Esophagus muscularis mucosa (tissue), 4 donors: ENCODE measurements at regions of chr10 and their contacts with region 1.

Region 1: DNA sequence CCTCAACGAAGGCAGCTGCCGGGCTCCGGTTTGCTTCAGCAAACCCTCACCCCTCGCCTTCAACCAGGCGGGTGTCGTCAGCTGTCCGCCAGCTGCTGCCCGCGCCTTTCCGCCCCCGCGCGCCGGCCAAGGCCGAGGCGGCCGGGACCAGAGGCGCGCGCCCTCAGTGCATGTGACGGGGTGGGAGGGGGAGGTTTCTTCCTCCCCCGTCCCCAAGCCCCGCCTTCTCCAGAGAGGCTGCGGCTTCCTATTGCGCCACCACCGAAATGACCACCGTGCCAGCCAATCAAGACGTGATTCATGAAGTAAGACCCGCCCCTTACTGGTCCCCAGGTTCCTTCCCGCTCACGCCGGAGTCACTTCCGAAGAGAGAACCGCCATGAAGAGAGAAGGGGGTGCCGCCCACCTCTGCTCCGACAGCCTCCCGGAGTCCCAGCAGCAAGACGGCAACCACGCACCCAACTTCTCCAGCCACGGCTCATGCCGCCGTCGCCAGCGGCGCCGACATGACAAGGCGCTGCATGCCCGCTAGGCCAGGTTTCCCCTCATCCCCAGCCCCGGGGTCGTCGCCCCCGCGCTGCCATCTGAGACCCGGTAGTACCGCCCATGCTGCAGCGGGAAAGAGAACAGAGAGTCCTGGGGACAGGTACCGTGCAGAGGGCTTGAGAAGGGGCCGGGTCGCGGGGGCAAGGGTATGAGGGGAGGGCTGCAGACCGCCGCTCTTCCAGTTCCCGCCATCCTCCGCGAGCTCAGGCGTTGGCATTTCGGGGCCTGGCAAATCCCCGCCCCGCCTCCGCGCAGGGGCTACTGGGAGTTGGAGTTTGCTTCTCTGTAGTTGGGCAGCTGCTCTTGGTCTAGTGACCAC is at the start of gene SLF2:
- DNase-seq: peak; percentile 100
- H3K4me3 ChIP-seq: peak within 1 kb of the TSS; percentile 80 to 100 (median 94)
- H3K27ac ChIP-seq: peak within 1 kb of the TSS; percentile 92 to 97 (median 96)
- H3K4me1 ChIP-seq: peaks cover 30 to 41% (median 33%) of the 10 kb centered on the region in 4 donors
- H3K27me3 ChIP-seq: no peaks in the 10 kb centered on the region
- CTCF ChIP-seq: peak in 1 of 3 experiments; percentile 1
- EP300 ChIP-seq: peak; percentile 3
- POLR2A ChIP-seq: peak; percentile 64
- total RNA-seq, gene SLF2: 19.1 to 34.1 (median 20.8) TPM

Region 2: GRCh38 chr10:100535715-100536353 is 377.0 kb before region 1 on chr10 and contains the start of gene HIF1AN:
- intact Hi-C with region 1: loop called (anchors 5 kb)
- DNase-seq: peak; percentile 95
- H3K4me3 ChIP-seq: peak within 1 kb of the TSS; percentile 66 to 89 (median 82)
- H3K27ac ChIP-seq: peak within 1 kb of the TSS; percentile 71 to 83 (median 78)
- H3K4me1 ChIP-seq: peaks cover 9 to 43% (median 35%) of the 10 kb centered on the region in 4 donors
- H3K27me3 ChIP-seq: no peaks in the 10 kb centered on the region
- CTCF ChIP-seq: peak; percentile 94 to 96 (median 96)
- EP300 ChIP-seq: no peak
- POLR2A ChIP-seq: peak; percentile 50
- total RNA-seq, gene HIF1AN: 7.6 to 15.4 (median 13.6) TPM

Region 3: DNA sequence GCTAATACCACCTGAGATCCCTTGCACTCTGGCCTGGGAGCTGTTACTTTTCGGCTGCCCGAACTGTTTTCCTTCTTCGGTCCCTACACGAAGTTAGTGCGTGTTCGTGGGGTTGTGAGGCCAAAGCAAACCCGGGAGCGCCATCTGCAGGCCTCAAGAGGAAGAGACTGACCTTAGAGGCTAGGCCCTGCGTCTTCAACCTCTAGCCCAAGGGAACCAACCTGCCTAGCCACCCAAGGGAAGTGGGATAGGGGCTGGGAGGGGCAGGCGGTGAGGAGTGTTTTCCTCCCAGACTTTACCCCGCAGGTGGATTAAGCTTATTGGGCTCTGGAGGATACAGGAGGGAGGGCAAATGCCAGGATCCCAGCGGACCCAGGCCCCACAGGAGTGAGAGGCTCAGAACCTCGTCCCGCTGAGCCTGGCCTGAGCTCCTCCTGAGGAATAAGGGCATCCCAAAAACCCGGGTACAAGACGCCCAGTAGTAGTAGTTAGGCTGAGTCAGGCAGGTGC is 169.2 kb before region 1 on chr10:
- intact Hi-C with region 1: no loop called
- DNase-seq: no peak
- H3K4me3 ChIP-seq: peak overlapping the region in 1 of 4 donors; percentile 47
- H3K27ac ChIP-seq: no peak overlapping the region
- H3K4me1 ChIP-seq: peaks cover 46 to 94% (median 83%) of the 10 kb centered on the region in 4 donors
- H3K27me3 ChIP-seq: peaks cover 7 to 100% (median 91%) of the 10 kb centered on the region in 4 donors
- CTCF ChIP-seq: peak; percentile 36 to 53 (median 39)
- EP300 ChIP-seq: no peak
- POLR2A ChIP-seq: no peak

Region 4: DNA sequence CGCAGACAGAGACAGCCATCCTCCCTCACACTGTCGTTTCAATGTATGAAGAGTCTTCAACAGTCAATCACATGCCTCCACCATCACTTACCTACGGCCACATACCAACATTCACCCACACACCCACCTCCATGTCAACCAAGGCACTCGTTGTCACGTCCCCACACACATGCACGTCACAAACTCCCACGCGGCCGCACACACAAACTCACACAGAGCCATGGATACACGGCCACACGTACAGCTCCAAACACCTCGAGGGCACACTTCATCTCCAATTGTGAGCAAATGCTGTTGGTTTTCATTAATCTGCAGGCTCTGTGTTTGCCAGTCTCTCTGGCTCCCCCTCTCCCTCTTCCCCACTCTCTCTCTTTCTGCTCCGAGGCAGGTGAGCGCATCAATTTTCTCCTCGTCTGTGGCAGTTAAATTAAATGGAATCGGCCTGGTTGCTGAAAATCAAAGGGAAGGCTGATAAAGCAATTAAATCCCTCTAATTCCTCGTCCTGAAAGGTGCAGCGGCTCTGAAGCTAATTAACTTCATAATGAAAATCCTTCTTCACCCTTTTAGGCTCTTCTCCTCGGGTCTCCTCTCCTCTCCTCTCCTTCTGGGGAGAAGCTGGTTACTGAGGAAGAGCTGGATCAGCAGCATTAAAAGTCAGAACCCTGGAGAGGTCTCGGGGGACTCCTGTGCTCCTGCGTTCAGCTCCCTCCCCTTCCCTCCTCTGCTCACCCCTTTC is 53.9 kb before region 1 on chr10:
- intact Hi-C with region 1: no loop called
- DNase-seq: no peak
- H3K4me3 ChIP-seq: no peak overlapping the region
- H3K27ac ChIP-seq: no peak overlapping the region
- H3K4me1 ChIP-seq: no peaks in the 10 kb centered on the region
- H3K27me3 ChIP-seq: peaks cover 0 to 73% (median 0%) of the 10 kb centered on the region in 4 donors
- CTCF ChIP-seq: no peak
- EP300 ChIP-seq: no peak
- POLR2A ChIP-seq: no peak

Region 5: DNA sequence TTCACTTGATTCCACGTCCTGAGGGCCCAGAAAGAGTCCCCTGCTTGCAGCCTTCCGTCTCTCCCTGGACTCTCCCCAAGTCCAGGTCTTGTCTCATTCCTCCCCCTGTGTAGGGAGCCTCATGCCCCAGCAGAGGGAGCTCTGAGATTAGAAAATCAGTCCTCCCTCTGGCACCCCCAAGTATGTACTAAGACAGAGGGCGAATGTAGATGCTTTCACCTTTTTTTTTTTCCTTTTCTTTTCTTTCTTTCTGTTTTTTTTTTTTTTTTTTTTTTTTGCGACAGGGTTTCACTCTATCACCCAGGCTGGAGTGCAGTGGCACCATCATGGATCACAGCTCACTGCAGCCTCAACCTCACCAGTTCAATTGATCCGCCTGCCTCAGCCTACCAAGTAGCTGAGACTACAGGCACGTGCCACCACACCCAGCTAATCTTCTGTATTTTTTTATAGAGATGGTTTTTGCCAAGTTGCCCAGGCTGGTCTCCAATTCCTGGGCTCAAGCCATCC is 128.5 kb after region 1 on chr10:
- intact Hi-C with region 1: no loop called
- DNase-seq: peak; percentile 96
- H3K4me3 ChIP-seq: no peak overlapping the region
- H3K27ac ChIP-seq: peak overlapping the region in 3 of 4 donors; percentile 85 to 91 (median 88)
- H3K4me1 ChIP-seq: peaks cover 12 to 30% (median 27%) of the 10 kb centered on the region in 4 donors
- H3K27me3 ChIP-seq: peaks cover 0 to 6% (median 0%) of the 10 kb centered on the region in 4 donors
- CTCF ChIP-seq: peak; percentile 84 to 90 (median 85)
- EP300 ChIP-seq: no peak
- POLR2A ChIP-seq: no peak